ENCODE measurements at regions of chr19 and their contacts with region 1.

Region 1: DNA sequence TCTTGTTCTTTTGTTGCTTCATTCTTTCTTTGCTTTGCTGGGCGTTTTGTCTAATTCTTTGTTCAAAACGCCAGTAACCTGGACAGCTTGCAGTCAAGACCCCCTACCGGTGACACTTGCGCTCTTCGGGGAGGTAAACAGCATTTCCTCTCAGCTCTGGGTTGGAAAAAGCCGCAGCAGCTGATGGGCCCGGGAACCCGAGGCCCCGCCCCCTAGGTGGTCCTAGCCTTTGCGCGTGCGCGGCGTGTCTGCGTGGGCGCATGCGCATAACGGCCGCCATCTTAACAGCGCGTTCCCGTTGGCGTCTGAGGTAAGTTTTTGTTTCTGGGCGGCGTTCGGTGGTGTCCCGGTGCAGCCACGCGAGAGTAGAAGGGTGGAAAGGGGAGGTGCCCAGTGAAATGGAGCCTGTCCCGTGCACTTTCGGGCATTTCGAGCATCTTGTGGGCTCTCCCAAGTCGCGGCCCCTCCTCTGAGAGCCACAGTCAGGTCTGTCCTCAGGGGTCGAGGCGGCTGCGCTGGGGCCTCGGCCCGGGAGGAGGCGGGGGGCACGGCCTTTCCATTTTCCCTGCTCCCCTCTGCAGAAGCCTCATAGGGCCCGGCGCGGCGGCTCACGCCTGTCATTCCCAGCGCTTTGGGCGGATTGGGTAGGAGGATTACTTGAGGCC is at the start of gene ZNF559:
- DNase-seq: peak; percentile 90
- H3K4me3 ChIP-seq: peak within 1 kb of the TSS; percentile 77
- H3K27ac ChIP-seq: peak within 1 kb of the TSS; percentile 91
- H3K27me3 ChIP-seq: no peaks in the 10 kb centered on the region
- CTCF ChIP-seq: peak; percentile 51
- polyA plus RNA-seq, gene ZNF559: 20.9 and 27.8 TPM in 2 replicates

Region 2: GRCh38 chr19:9128171-9128570 is 195.9 kb before region 1 on chr19:
- CTCF ChIA-PET with region 1: no interaction called
- POLR2A ChIA-PET with region 1: no interaction called
- DNase-seq: no peak
- H3K4me3 ChIP-seq: no peak overlapping the region
- H3K27ac ChIP-seq: no peak overlapping the region
- H3K27me3 ChIP-seq: no peaks in the 10 kb centered on the region
- CTCF ChIP-seq: no peak

Region 3: GRCh38 chr19:9309139-9309973 is 14.7 kb before region 1 on chr19 and contains the start of gene ZNF699:
- CTCF ChIA-PET with region 1: interaction called, 10 read pairs
- POLR2A ChIA-PET with region 1: interaction called, 4 read pairs
- DNase-seq: peak; percentile 94
- H3K4me3 ChIP-seq: peak within 1 kb of the TSS; percentile 93
- H3K27ac ChIP-seq: peak within 1 kb of the TSS; percentile 89
- H3K27me3 ChIP-seq: no peaks in the 10 kb centered on the region
- CTCF ChIP-seq: no peak
- polyA plus RNA-seq, gene ZNF699: 3.2 and 3.3 TPM in 2 replicates

Measured in AG04450 (cell line).